CD4-positive, alpha-beta memory T cell (primary cell): ENCODE measurements at regions of chr6 and their contacts with region 1.

Region 1: GRCh38 chr6:139375232-139376016 is 976 bp upstream of the CITED2 start:
- DNase-seq: peak; percentile 87 to 95 (median 91)
- H3K4me3 ChIP-seq: peak overlapping the region; percentile 52 to 98
- H3K4me3 Mint-ChIP-seq: peak overlapping the region; percentile 93 to 100 (median 98)
- H3K27ac ChIP-seq: peak overlapping the region; percentile 82
- H3K27ac Mint-ChIP-seq: peak overlapping the region; percentile 96 to 99 (median 96)
- H3K4me1 ChIP-seq: peaks cover 26% of the 10 kb centered on the region
- H3K4me1 Mint-ChIP-seq: peaks cover 18 to 44% (median 26%) of the 10 kb centered on the region in 4 donors
- H3K27me3 ChIP-seq: no peaks in the 10 kb centered on the region
- H3K27me3 Mint-ChIP-seq: no peaks in the 10 kb centered on the region

Region 2: GRCh38 chr6:138773177-138774091 is 602.0 kb before region 1 on chr6 and contains the start of gene CCDC28A:
- CTCF ChIA-PET with region 1: no interaction called
- POLR2A ChIA-PET with region 1: interaction called, 36 read pairs
- intact Hi-C with region 1: loop called (anchors 1 kb)
- DNase-seq: peak; percentile 96 to 98 (median 97)
- H3K4me3 ChIP-seq: peak within 1 kb of the TSS; percentile 72 to 99
- H3K4me3 Mint-ChIP-seq: peak within 1 kb of the TSS; percentile 91 to 100 (median 99)
- H3K27ac ChIP-seq: peak within 1 kb of the TSS; percentile 90
- H3K27ac Mint-ChIP-seq: peak within 1 kb of the TSS; percentile 97 to 100 (median 100)
- H3K4me1 ChIP-seq: peaks cover 18% of the 10 kb centered on the region
- H3K4me1 Mint-ChIP-seq: peaks cover 12 to 46% (median 26%) of the 10 kb centered on the region in 4 donors
- H3K27me3 ChIP-seq: no peaks in the 10 kb centered on the region
- H3K27me3 Mint-ChIP-seq: peaks cover 0 to 3% of the 10 kb centered on the region in 2 donors
- total RNA-seq, gene CCDC28A: 32.4 to 33.9 TPM

Region 3: DNA sequence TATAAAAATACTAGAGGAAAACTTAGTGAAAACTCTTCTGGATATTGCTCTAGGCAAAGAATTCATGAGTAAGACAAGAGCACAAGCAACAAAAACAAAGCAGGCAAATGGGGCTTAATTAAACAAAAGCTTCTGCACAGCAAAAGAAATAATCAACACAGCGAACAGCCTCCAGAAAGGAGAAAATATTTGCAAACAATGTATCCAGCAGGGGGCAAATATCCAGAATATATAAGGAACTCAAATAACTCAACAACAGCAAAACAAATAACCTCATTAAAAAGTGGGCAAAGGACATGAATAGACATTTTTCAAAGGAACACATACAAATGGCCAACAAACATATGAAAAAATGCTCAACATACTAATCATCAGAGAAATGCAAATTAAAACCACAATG is 257.7 kb before region 1 on chr6:
- CTCF ChIA-PET with region 1: interaction called, 13 read pairs
- POLR2A ChIA-PET with region 1: interaction called, 59 read pairs
- intact Hi-C with region 1: no loop called
- DNase-seq: no peak
- H3K4me3 ChIP-seq: no peak overlapping the region
- H3K4me3 Mint-ChIP-seq: peak overlapping the region in 2 of 8 donors; percentile 16 to 69
- H3K27ac ChIP-seq: no peak overlapping the region
- H3K27ac Mint-ChIP-seq: peak overlapping the region in 2 of 7 donors; percentile 62 to 64
- H3K4me1 ChIP-seq: peaks cover 49% of the 10 kb centered on the region
- H3K4me1 Mint-ChIP-seq: peaks cover 38 to 57% (median 46%) of the 10 kb centered on the region in 4 donors
- H3K27me3 ChIP-seq: no peaks in the 10 kb centered on the region
- H3K27me3 Mint-ChIP-seq: no peaks in the 10 kb centered on the region

Region 4: GRCh38 chr6:139161817-139162284 is 213.6 kb before region 1 on chr6:
- CTCF ChIA-PET with region 1: interaction called, 3 read pairs
- POLR2A ChIA-PET with region 1: interaction called, 45 read pairs
- intact Hi-C with region 1: no loop called
- DNase-seq: peak; percentile 62 to 87 (median 69)
- H3K4me3 ChIP-seq: peak overlapping the region in 1 of 2 donors; percentile 12
- H3K4me3 Mint-ChIP-seq: peak overlapping the region; percentile 76 to 91 (median 83)
- H3K27ac ChIP-seq: peak overlapping the region; percentile 56
- H3K27ac Mint-ChIP-seq: peak overlapping the region; percentile 86 to 98 (median 95)
- H3K4me1 ChIP-seq: peaks cover 100% of the 10 kb centered on the region
- H3K4me1 Mint-ChIP-seq: peaks cover 73 to 97% (median 85%) of the 10 kb centered on the region in 4 donors
- H3K27me3 ChIP-seq: no peaks in the 10 kb centered on the region
- H3K27me3 Mint-ChIP-seq: no peaks in the 10 kb centered on the region

Region 5: GRCh38 chr6:139323511-139324300 is 51.7 kb before region 1 on chr6:
- CTCF ChIA-PET with region 1: interaction called, 3 read pairs
- POLR2A ChIA-PET with region 1: interaction called, 59 read pairs
- intact Hi-C with region 1: loop called (anchors 1 kb)
- DNase-seq: peak; percentile 86 to 91 (median 89)
- H3K4me3 ChIP-seq: peak overlapping the region; percentile 33 to 61
- H3K4me3 Mint-ChIP-seq: peak overlapping the region; percentile 78 to 92 (median 88)
- H3K27ac ChIP-seq: peak overlapping the region; percentile 87
- H3K27ac Mint-ChIP-seq: peak overlapping the region; percentile 98 to 100 (median 98)
- H3K4me1 ChIP-seq: peaks cover 35% of the 10 kb centered on the region
- H3K4me1 Mint-ChIP-seq: peaks cover 21 to 43% (median 34%) of the 10 kb centered on the region in 4 donors
- H3K27me3 ChIP-seq: no peaks in the 10 kb centered on the region
- H3K27me3 Mint-ChIP-seq: no peaks in the 10 kb centered on the region

Region 6: GRCh38 chr6:139540276-139540675 is 164.9 kb after region 1 on chr6:
- CTCF ChIA-PET with region 1: interaction called, 10 read pairs
- POLR2A ChIA-PET with region 1: interaction called, 153 read pairs
- intact Hi-C with region 1: no loop called
- DNase-seq: peak; percentile 50 to 69 (median 61)
- H3K4me3 ChIP-seq: no peak overlapping the region
- H3K4me3 Mint-ChIP-seq: peak overlapping the region in 7 of 8 donors; percentile 31 to 82 (median 68)
- H3K27ac ChIP-seq: peak overlapping the region; percentile 46
- H3K27ac Mint-ChIP-seq: peak overlapping the region; percentile 69 to 93 (median 90)
- H3K4me1 ChIP-seq: peaks cover 66% of the 10 kb centered on the region
- H3K4me1 Mint-ChIP-seq: peaks cover 43 to 72% (median 53%) of the 10 kb centered on the region in 4 donors
- H3K27me3 ChIP-seq: no peaks in the 10 kb centered on the region
- H3K27me3 Mint-ChIP-seq: no peaks in the 10 kb centered on the region

Region 7: DNA sequence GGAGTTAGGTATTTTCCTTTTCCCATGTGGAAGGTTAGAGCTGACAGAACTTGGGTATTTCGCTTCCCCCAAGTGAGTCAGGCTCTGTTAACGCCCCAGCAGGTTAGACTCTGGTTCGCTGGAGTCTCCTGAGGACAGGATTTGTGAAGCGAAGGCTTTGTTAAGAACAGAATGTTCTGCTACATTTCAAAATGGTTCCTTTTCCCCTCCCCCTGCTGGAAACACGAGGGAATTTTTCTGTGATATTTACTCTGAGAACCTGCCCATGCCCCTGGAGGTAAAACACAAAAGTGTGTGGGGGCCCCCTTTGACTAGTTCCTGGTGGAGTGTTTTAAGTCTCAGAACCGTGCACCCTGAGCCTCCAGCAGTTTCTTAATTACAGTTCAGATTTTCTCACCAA is 730.4 kb after region 1 on chr6:
- CTCF ChIA-PET with region 1: no interaction called
- POLR2A ChIA-PET with region 1: no interaction called
- intact Hi-C with region 1: loop called (anchors 10 kb)
- DNase-seq: peak in 1 of 5 donors; percentile 1
- H3K4me3 ChIP-seq: no peak overlapping the region
- H3K4me3 Mint-ChIP-seq: no peak overlapping the region
- H3K27ac ChIP-seq: no peak overlapping the region
- H3K27ac Mint-ChIP-seq: no peak overlapping the region
- H3K4me1 ChIP-seq: no peaks in the 10 kb centered on the region
- H3K4me1 Mint-ChIP-seq: peaks cover 0 to 4% (median 0%) of the 10 kb centered on the region in 4 donors
- H3K27me3 ChIP-seq: no peaks in the 10 kb centered on the region
- H3K27me3 Mint-ChIP-seq: peaks cover 0 to 6% of the 10 kb centered on the region in 2 donors